Tibial artery (tissue), 4 donors: ENCODE measurements at regions of chr9 and their contacts with region 1.

Region 1: DNA sequence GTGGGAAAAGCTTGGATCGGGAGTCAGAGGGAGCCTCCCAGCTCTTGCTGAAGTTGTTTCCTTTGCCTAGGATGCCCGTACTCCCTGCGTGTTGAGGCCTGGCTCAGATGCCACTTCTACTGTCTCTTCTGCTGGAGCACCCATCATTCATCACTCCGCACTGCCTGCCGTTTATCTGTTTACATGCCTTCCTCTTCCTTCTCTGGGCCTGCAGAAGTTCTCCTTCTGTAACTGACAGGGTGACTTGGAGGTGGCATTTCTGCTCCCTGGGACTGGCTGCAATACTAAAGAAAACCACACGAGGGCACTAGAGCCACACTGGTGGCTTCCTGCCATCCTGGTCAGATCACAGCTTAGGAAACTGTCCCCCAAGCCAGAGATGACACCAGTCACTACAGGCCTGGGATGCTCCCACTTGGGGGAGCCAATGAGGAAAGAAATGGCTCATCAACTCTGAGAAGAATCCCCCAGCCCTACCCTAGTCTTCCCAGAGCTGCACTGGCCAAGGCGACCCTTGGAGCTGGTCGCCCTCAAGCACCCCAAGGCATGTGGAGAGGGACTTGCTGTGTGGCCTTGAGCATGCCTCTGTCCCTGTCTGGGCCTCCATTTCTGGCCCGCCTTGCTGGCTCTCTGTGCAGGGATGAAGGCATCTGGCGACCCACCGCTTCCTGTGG is 9.7 kb upstream of the SLC25A51 start:
- DNase-seq: peak; percentile 75 to 88
- H3K4me3 ChIP-seq: no peak overlapping the region
- H3K27ac ChIP-seq: no peak overlapping the region
- H3K4me1 ChIP-seq: no peaks in the 10 kb centered on the region
- H3K27me3 ChIP-seq: no peaks in the 10 kb centered on the region
- CTCF ChIP-seq: peak; percentile 95 to 98

Region 2: GRCh38 chr9:37650873-37651768 is 262.5 kb before region 1 on chr9 and contains the start of gene FRMPD1:
- intact Hi-C with region 1: no loop called
- DNase-seq: no peak
- H3K4me3 ChIP-seq: peak within 1 kb of the TSS; percentile 48 to 65
- H3K27ac ChIP-seq: no peak within 1 kb of the TSS
- H3K4me1 ChIP-seq: peaks cover 0 to 15% (median 11%) of the 10 kb centered on the region in 4 donors
- H3K27me3 ChIP-seq: peaks cover 0 to 35% of the 10 kb centered on the region in 2 donors
- CTCF ChIP-seq: no peak

Region 3: GRCh38 chr9:37859043-37859442 is 54.6 kb before region 1 on chr9:
- intact Hi-C with region 1: no loop called
- DNase-seq: no peak
- H3K4me3 ChIP-seq: no peak overlapping the region
- H3K27ac ChIP-seq: no peak overlapping the region
- H3K4me1 ChIP-seq: no peaks in the 10 kb centered on the region
- H3K27me3 ChIP-seq: no peaks in the 10 kb centered on the region
- CTCF ChIP-seq: no peak

Region 4: GRCh38 chr9:38088006-38088925 is 174.6 kb after region 1 on chr9:
- intact Hi-C with region 1: loop called (anchors 5 kb)
- DNase-seq: peak; percentile 70 to 86
- H3K4me3 ChIP-seq: no peak overlapping the region
- H3K27ac ChIP-seq: no peak overlapping the region
- H3K4me1 ChIP-seq: peaks cover 0 to 8% (median 2%) of the 10 kb centered on the region in 4 donors
- H3K27me3 ChIP-seq: no peaks in the 10 kb centered on the region
- CTCF ChIP-seq: peak; percentile 89 to 96

Region 5: DNA sequence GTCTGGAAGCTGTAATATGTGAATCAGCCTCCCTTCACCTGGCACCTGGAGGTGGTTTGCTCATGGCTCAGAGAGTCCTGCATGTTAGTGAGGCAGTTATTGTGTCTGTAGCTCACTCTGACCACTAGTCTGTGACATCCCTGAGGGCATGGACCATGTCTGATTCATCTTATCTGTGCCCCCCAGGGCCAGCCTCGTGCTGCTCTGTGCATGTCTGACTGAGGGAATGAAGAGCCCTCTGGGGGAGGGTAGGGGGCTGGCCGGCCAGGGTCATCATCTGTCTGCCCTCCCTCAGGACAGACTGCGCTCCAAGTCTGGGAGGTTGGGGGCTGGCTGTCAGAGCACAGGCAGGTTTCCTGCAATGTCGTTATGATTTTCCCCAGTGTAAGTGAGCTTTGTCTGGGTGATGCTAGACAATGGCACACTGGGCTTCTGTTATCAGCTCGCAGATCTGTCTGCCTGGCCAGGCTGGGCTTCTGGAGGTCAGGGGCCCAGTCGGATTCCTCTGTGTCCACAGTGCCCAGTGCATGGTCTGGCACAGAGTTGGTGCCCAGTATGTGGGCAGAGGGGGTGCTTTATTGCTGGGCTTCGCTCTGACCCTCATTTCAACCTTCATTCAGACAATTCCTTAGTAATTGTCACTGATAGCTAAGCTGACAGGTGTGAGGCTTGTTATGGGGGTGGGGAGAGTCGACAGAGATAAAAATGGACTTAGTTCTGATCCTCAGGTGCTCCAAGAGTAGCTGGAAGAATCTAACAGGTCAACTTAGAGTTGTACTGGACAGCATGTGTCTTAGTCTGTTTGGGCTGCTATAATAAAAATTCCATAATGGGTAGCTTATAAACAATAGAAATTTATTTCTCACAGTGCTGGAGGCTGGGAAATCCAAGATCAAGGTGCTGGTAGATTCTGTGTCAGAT is 241.1 kb after region 1 on chr9:
- intact Hi-C with region 1: loop called (anchors 2 kb)
- DNase-seq: no peak
- H3K4me3 ChIP-seq: no peak overlapping the region
- H3K27ac ChIP-seq: no peak overlapping the region
- H3K4me1 ChIP-seq: no peaks in the 10 kb centered on the region
- H3K27me3 ChIP-seq: peaks cover 0 to 10% of the 10 kb centered on the region in 2 donors
- CTCF ChIP-seq: no peak